ENCODE measurements at regions of chr19 and their contacts with region 1.

Region 1: GRCh38 chr19:8321060-8321985 is at the starts of genes NDUFA7 and RPS28:
- DNase-seq: peak; percentile 96 to 99 (median 98)
- ATAC-seq: peak; percentile 93 to 96 (median 95)
- H3K4me3 ChIP-seq: peak within 1 kb of the TSS; percentile 58 to 98 (median 79)
- H3K27ac ChIP-seq: peak within 1 kb of the TSS; percentile 89 to 97 (median 92)
- H3K4me1 ChIP-seq: peaks cover 5 to 53% (median 38%) of the 10 kb centered on the region in 12 donors
- H3K27me3 ChIP-seq: no peaks in the 10 kb centered on the region
- CTCF ChIP-seq: peak; percentile 17 to 60 (median 40)
- POLR2A ChIP-seq: peak; percentile 12 to 93
- total RNA-seq, gene NDUFA7: 74.5 to 179 (median 93.6) TPM
- total RNA-seq, gene RPS28: 271 to 1,278 (median 1,186) TPM

Region 2: GRCh38 chr19:8269724-8270123 is 51.6 kb before region 1 on chr19:
- intact Hi-C with region 1: loop called in 3 of 10 experiments (anchors 5 to 10 kb)
- DNase-seq: no peak
- ATAC-seq: no peak
- H3K4me3 ChIP-seq: peak overlapping the region in 2 of 12 donors; percentile 46 to 67
- H3K27ac ChIP-seq: peak overlapping the region in 2 of 12 donors; percentile 58 to 81
- H3K4me1 ChIP-seq: peaks cover 0 to 11% (median 4%) of the 10 kb centered on the region in 12 donors
- H3K27me3 ChIP-seq: no peaks in the 10 kb centered on the region
- CTCF ChIP-seq: no peak
- POLR2A ChIP-seq: no peak

Region 3: DNA sequence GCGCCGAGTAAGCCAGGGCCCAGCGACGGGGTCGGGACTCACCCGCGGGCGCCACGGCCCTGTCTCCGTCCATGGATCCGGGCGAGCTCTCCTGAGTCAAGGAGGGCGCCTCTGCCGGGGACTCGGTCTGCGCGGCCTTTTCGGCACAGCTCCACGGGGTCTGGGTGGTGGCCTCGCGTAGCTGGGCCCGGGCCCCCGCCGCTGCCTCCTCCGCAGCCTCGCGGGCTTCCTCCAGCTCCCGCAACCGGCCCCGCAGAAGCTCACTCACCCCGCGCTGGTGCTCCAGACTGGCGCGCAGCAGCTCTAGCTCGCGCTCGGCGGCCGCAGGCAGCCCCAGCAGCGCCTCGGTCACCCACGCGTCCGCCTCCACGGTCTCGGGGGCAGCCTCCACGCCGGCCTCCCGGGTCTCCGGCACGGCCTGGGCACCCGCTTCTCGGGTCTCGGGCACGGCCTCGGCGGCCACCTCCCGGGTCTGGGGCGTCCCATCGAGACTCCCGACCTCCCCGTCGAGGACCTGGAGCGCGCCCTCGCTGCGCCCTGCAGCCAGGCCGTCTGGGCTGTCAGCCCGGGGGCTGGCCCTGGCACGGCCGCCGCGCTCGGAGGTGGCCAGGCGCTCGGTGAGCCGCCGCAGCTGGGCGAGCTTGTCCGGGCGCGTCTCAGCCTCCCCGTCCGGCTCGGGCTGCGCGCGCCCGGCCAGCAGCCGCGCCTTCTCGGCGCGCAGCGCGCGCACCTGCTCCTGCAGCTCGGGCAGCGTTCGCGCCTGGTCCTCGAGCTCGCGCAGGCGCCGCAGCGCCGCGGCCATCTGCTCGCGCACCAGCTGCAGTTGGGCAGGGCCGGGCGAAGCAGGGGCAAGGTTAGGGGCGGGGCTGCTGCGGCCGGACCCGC is 13.4 kb after region 1 on chr19:
- intact Hi-C with region 1: no loop called
- DNase-seq: peak in 4 of 5 donors; percentile 53 to 76 (median 56)
- ATAC-seq: peak in 2 of 4 donors; percentile 67 to 70
- H3K4me3 ChIP-seq: peak overlapping the region in 9 of 12 donors; percentile 15 to 45 (median 35)
- H3K27ac ChIP-seq: peak overlapping the region in 8 of 12 donors; percentile 44 to 83 (median 76)
- H3K4me1 ChIP-seq: peaks cover 10 to 52% (median 34%) of the 10 kb centered on the region in 12 donors
- H3K27me3 ChIP-seq: peaks cover 6 to 44% (median 13%) of the 10 kb centered on the region in 9 donors
- CTCF ChIP-seq: no peak
- POLR2A ChIP-seq: no peak